Activated CD4-positive, alpha-beta memory T cell treated with anti-CD3 and anti-CD28 coated beads for 36 hours (primary cell): ENCODE measurements at regions of chr14 and their contacts with region 1.

Region 1: DNA sequence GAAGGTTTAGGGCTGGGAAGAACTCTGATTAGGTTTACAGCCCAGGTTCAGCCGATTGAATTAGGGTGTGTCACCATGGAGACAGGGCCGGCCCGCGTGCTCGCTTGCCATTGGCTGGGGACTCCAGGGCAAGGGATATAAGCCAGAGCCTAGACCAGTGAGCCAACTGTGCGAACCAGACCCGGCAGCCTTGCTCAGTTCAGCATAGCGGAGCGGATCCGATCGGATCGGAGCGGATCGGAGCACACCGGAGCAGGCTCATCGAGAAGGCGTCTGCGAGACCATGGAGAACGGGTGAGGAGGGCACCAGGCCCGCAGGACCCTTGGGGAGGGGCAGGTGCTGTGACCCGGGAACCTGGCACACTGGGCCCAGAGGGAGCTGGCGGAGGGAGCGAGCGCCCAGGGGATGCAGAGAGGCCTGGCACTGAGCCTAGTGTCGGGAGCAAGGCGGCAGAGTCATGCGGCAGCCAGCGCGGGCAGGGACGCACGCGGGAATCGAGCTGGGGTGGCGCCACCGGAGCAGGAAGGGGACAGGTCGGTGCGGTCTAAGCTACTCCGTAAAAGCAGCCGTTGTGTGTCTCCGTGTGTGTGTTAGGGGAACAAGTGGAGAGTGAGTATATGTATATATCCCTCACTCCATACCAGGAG is at the start of gene PNP:
- DNase-seq: peak; percentile 93
- H3K4me3 Mint-ChIP-seq: peak within 1 kb of the TSS; percentile 89
- H3K27ac Mint-ChIP-seq: peak within 1 kb of the TSS; percentile 99
- H3K4me1 Mint-ChIP-seq: peaks cover 39% of the 10 kb centered on the region
- H3K27me3 Mint-ChIP-seq: no peaks in the 10 kb centered on the region
- total RNA-seq, gene PNP: 178 to 179 TPM

Region 2: DNA sequence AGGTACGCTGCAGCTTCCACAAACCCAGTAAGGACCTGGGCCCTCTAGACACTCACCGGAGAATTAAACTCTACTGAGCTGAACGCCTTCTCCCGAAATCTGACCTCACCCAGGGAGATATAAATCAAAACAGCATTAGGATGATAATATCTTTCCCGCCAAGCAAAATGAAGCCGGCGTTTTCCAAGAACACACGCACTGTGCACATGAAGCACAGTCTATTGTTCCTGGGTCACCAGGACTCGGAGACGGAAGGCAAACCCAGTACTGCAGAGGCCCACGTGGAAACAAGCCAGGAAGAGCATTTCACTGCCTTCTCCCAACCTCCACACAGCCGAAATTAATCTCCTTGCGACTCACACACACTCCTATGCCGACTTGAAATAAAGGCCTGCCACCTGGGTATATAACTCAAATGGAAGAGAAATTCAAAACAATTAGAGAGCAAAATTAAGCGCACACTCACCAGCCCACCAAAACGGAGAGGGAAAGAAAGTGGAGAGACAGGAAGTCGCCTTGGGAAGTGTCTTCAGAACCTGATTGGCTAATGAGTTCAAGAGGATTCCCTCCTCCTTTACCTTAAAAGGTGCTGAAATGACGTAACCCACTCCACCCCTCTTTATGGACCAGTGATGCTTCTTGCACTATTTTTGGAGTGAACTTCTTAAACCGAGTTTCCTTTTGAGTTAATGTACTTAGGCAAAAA is 136.4 kb before region 1 on chr14 and contains the start of gene CCNB1IP1:
- CTCF ChIA-PET with region 1: interaction called, 3 read pairs
- POLR2A ChIA-PET with region 1: interaction called, 8 read pairs
- intact Hi-C with region 1: loop called (anchors 1 kb)
- DNase-seq: peak; percentile 54
- H3K4me3 Mint-ChIP-seq: peak within 1 kb of the TSS; percentile 99
- H3K27ac Mint-ChIP-seq: peak within 1 kb of the TSS; percentile 92
- H3K4me1 Mint-ChIP-seq: peaks cover 36% of the 10 kb centered on the region
- H3K27me3 Mint-ChIP-seq: no peaks in the 10 kb centered on the region
- total RNA-seq, gene CCNB1IP1: 70.2 to 77.4 TPM

Region 3: GRCh38 chr14:20400965-20401593 is 68.3 kb before region 1 on chr14:
- CTCF ChIA-PET with region 1: no interaction called
- POLR2A ChIA-PET with region 1: interaction called, 4 read pairs
- intact Hi-C with region 1: loop called (anchors 2 kb)
- DNase-seq: peak; percentile 43
- H3K4me3 Mint-ChIP-seq: peak overlapping the region; percentile 52
- H3K27ac Mint-ChIP-seq: peak overlapping the region; percentile 95
- H3K4me1 Mint-ChIP-seq: peaks cover 30% of the 10 kb centered on the region
- H3K27me3 Mint-ChIP-seq: no peaks in the 10 kb centered on the region

Region 4: DNA sequence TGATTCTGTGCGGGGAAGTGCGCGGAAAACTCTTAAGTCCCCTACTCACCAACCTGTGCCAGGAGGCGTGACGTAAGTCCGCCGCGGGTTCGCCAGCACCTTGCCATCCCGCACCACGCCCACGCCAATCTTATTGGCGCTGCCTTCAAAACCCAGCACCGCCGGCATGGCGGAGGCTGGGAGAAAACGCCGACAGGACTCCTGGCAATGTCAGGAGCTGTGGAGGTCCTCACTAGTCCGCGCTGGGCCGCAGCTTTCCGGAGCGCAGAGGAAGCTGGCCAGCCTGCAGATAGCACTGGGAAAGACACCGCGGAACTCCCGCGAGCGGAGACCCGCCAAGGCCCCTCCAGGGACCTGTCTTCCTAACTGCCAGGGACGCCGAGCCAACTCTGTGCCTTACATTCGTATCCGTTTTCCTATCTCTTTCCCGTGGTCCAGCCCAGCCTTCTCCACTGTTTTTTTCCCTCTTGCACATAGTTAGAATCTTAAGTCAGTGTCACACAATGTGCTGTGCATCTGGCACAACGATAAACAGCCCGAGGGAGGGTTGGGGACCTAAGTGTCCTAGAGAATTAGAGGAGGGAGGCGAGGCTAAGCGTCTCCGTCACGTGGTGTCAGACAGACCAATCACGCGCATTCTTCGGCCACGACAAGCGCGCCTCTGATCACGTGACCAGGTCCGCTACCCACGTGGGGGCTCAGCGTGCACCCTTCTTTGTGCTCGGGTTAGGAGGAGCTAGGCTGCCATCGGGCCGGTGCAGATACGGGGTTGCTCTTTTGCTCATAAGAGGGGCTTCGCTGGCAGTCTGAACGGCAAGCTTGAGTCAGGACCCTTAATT is 14.6 kb before region 1 on chr14 and contains the starts of genes APEX1 and OSGEP:
- CTCF ChIA-PET with region 1: interaction called, 12 read pairs
- POLR2A ChIA-PET with region 1: interaction called, 66 read pairs
- intact Hi-C with region 1: loop called (anchors 1 kb)
- DNase-seq: peak; percentile 99
- H3K4me3 Mint-ChIP-seq: peak within 1 kb of the TSS; percentile 13
- H3K27ac Mint-ChIP-seq: no peak within 1 kb of the TSS
- H3K4me1 Mint-ChIP-seq: peaks cover 22% of the 10 kb centered on the region
- H3K27me3 Mint-ChIP-seq: no peaks in the 10 kb centered on the region
- total RNA-seq, gene APEX1: 186 to 193 TPM
- total RNA-seq, gene OSGEP: 39.2 to 41.0 TPM

Region 5: DNA sequence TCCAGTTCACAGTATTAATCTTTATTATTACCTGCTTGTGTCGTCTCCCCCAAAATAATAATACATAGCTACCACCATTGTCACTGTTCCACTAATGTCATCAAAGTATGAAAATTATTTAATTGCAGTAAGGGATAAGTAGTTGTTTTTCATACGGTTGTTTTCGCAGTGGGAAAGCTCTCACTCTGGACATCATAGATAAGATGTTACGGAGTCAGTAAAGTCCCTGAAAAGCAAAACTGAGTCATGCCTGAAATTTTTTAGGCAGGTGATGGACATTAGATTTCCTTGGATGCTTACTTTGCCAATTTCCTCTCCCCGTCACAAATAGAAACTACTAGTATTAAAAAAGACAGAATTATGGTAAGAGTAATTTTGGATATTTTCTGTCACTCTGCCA is 13.0 kb after region 1 on chr14:
- CTCF ChIA-PET with region 1: interaction called, 3 read pairs
- POLR2A ChIA-PET with region 1: interaction called, 19 read pairs
- intact Hi-C with region 1: loop called (anchors 1 kb)
- DNase-seq: no peak
- H3K4me3 Mint-ChIP-seq: no peak overlapping the region
- H3K27ac Mint-ChIP-seq: peak overlapping the region; percentile 26
- H3K4me1 Mint-ChIP-seq: peaks cover 52% of the 10 kb centered on the region
- H3K27me3 Mint-ChIP-seq: no peaks in the 10 kb centered on the region

Region 6: DNA sequence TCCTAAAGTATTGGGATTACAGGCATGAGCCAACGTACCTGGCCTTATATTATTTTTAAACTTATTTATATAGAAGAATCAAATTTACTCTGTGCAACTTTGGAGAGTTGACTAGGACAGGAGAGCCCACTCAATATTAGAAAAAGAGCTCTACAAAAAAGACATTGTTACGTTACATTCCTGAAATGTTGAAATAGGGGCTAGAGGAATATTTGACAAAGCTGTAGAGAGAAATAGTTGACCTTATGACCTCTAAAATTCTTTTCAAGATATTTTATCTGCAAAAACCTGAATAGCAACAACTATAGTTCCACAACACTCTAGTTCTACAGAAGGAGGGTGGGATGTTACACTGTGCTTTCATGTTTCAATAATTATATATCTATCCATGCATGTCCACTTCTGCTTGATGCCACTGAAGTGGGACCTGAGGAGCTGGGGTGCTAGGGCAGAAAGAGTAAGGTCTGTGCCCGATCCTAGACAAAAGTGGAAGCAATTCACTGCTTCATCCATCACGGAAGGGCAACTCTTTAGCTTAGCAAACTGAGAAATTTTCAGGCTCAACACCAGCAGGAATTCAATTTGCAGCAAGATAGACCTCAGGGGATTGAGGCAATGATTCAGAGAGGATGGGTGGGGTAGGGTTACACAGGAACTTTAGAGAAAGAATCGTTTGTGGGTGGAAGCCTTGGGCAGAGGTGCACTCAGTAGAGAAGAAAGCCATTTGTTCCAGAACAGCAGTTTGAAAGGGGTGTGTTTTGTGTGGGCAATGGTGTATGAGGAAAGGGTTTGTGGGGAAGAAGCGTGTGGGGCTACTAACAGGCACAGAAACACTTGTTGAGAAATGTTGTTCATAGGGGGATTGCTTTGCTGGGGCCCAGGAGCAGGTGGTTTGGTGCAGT is 20.0 kb after region 1 on chr14:
- CTCF ChIA-PET with region 1: no interaction called
- POLR2A ChIA-PET with region 1: interaction called, 5 read pairs
- intact Hi-C with region 1: loop called (anchors 1 kb)
- DNase-seq: no peak
- H3K4me3 Mint-ChIP-seq: peak overlapping the region; percentile 1
- H3K27ac Mint-ChIP-seq: peak overlapping the region; percentile 65
- H3K4me1 Mint-ChIP-seq: peaks cover 63% of the 10 kb centered on the region
- H3K27me3 Mint-ChIP-seq: no peaks in the 10 kb centered on the region

Region 7: GRCh38 chr14:20494935-20495766 is 25.8 kb after region 1 on chr14:
- CTCF ChIA-PET with region 1: no interaction called
- POLR2A ChIA-PET with region 1: interaction called, 5 read pairs
- intact Hi-C with region 1: loop called (anchors 1 kb)
- DNase-seq: no peak
- H3K4me3 Mint-ChIP-seq: no peak overlapping the region
- H3K27ac Mint-ChIP-seq: peak overlapping the region; percentile 35
- H3K4me1 Mint-ChIP-seq: peaks cover 45% of the 10 kb centered on the region
- H3K27me3 Mint-ChIP-seq: no peaks in the 10 kb centered on the region